ENCODE measurements at regions of chr12 and their contacts with region 1.

Region 1: DNA sequence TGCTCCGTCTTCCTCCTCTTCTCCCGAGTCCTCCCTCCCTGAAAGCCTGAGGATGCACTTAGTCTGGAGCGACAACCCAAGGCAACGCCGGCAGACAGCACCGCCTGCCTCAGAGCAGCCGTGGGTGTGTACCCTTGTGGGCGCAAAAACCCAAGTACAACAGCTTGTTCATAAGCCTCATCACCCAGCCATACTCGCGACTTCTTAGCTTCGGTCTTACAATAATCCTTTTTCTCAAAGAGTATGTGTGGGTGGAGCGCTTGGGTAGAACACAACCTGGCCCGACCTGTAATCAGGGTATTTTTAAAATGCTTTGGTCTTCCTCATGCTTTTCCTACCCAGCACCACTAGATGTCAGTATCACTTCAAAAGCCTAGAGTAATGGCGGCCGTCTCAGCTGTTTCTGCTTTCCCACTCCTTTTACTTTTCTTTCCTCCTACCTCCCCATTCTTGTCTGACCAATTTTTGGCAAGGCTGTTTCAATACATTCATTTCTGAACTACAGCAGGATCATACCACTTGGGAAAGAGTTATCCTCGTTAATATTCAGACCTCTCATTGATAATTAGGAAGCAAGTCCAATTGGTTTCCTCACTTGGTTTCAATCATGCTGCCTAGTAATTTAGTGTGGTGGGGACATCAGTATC is 198.9 kb downstream of the EPS8 start:
- DNase-seq: peak in 1 of 2 donors; percentile 81
- ATAC-seq: peak; percentile 83 to 97 (median 97)
- H3K4me3 ChIP-seq: no peak overlapping the region
- H3K4me3 Mint-ChIP-seq: peak overlapping the region; percentile 65
- H3K27ac ChIP-seq: no peak overlapping the region
- H3K27ac Mint-ChIP-seq: peak overlapping the region; percentile 24 to 68
- H3K4me1 ChIP-seq: peaks cover 5% of the 10 kb centered on the region
- H3K4me1 Mint-ChIP-seq: peaks cover 9 to 11% of the 10 kb centered on the region in 2 donors
- H3K27me3 ChIP-seq: peaks cover 2% of the 10 kb centered on the region
- H3K27me3 Mint-ChIP-seq: peaks cover 6 to 16% of the 10 kb centered on the region in 2 donors
- CTCF ChIP-seq: peak; percentile 90

Region 2: DNA sequence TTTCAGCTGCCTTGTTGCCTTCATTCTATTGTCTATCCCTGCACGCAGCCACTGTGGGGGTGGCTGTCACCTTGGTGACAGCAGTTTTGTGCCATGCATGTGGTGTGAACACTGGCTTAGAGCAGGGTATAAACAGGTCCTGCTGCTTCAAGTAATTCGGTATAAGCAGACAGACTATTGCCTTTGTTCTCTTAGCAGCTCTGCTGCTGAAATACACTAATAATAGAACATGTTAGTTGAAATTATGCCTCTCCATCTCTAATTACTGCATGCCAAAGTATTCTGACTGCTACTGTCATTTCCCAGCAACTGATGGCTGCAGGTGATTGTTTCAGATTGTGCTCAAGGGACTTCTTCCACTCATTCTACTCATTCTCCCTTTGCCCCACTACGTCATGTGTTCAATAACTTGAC is 233.3 kb before region 1 on chr12:
- intact Hi-C with region 1: no loop called
- DNase-seq: no peak
- ATAC-seq: no peak
- H3K4me3 ChIP-seq: no peak overlapping the region
- H3K4me3 Mint-ChIP-seq: no peak overlapping the region
- H3K27ac ChIP-seq: no peak overlapping the region
- H3K27ac Mint-ChIP-seq: no peak overlapping the region
- H3K4me1 ChIP-seq: no peaks in the 10 kb centered on the region
- H3K4me1 Mint-ChIP-seq: no peaks in the 10 kb centered on the region
- H3K27me3 ChIP-seq: no peaks in the 10 kb centered on the region
- H3K27me3 Mint-ChIP-seq: no peaks in the 10 kb centered on the region
- CTCF ChIP-seq: no peak

Region 3: DNA sequence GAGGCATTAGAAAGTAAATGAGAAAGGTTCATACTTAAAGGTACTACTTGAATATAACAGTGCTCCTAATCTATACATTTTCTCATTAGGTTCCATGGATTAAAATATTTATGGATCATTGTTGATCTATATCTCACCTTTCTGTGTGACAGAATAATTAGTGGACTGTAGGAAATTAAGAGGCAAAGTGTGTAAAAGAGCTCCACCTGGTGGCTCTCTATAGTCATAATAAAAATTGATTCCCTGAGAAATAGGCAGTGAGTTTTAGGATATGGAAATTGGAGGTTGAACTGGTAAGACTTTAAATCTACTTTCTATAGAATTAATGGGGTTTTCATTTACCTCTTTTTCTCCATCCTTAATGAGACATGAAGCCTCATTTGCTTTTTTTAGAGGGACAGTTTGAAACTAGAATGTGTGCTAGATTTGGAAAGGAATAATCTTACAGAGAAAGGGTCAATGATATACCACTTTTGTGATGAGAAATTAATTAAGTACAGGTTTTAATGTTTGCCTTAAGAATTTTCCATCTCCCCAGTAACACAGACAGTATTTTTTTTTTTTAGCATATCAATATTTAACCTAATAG is 309.1 kb after region 1 on chr12:
- intact Hi-C with region 1: loop called (anchors 1 kb)
- DNase-seq: peak in 1 of 2 donors; percentile 65
- ATAC-seq: peak; percentile 70 to 74 (median 70)
- H3K4me3 ChIP-seq: no peak overlapping the region
- H3K4me3 Mint-ChIP-seq: no peak overlapping the region
- H3K27ac ChIP-seq: no peak overlapping the region
- H3K27ac Mint-ChIP-seq: peak overlapping the region; percentile 23 to 73
- H3K4me1 ChIP-seq: no peaks in the 10 kb centered on the region
- H3K4me1 Mint-ChIP-seq: peaks cover 0 to 7% of the 10 kb centered on the region in 2 donors
- H3K27me3 ChIP-seq: no peaks in the 10 kb centered on the region
- H3K27me3 Mint-ChIP-seq: no peaks in the 10 kb centered on the region
- CTCF ChIP-seq: peak; percentile 93

Measured in natural killer cell (primary cell).